ENCODE measurements at regions of chr9 and their contacts with region 1.

Region 1: GRCh38 chr9:37753489-37754190 is at the start of gene TRMT10B:
- DNase-seq: peak; percentile 10
- H3K4me3 ChIP-seq: peak within 1 kb of the TSS; percentile 78
- H3K27ac ChIP-seq: peak within 1 kb of the TSS; percentile 39
- H3K27me3 ChIP-seq: no peaks in the 10 kb centered on the region
- CTCF ChIP-seq: peak; percentile 24; the same call in 1 of the 2 replicates
- polyA plus RNA-seq, gene TRMT10B: 6.3 and 6.9 TPM in 2 replicates

Region 2: DNA sequence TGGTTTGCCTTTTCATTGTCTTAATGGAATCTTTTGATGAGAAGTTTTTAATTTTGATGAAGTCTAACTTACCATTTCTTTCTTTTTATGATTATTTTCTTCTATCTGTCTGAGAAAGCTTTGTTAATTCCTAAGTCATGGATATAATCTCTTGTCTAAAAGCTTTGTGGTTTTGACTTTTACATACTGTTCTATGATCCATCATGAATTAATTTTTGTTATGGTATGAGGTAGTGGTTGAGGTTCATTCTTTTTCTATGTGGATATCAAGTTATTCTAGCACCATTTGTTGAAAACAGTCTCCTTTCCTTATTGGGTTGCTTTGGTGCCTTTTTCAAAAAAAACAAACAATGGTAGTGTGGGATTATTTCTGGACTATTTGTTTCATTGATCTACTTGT is 197.9 kb before region 1 on chr9:
- CTCF ChIA-PET with region 1: no interaction called
- POLR2A ChIA-PET with region 1: no interaction called
- DNase-seq: no peak
- H3K4me3 ChIP-seq: no peak overlapping the region
- H3K27ac ChIP-seq: no peak overlapping the region
- H3K27me3 ChIP-seq: no peaks in the 10 kb centered on the region
- CTCF ChIP-seq: no peak

Region 3: GRCh38 chr9:38130724-38131123 is 377.1 kb after region 1 on chr9:
- CTCF ChIA-PET with region 1: no interaction called
- POLR2A ChIA-PET with region 1: no interaction called
- DNase-seq: no peak
- H3K4me3 ChIP-seq: no peak overlapping the region
- H3K27ac ChIP-seq: no peak overlapping the region
- H3K27me3 ChIP-seq: peaks cover 47% of the 10 kb centered on the region
- CTCF ChIP-seq: no peak

Region 4: DNA sequence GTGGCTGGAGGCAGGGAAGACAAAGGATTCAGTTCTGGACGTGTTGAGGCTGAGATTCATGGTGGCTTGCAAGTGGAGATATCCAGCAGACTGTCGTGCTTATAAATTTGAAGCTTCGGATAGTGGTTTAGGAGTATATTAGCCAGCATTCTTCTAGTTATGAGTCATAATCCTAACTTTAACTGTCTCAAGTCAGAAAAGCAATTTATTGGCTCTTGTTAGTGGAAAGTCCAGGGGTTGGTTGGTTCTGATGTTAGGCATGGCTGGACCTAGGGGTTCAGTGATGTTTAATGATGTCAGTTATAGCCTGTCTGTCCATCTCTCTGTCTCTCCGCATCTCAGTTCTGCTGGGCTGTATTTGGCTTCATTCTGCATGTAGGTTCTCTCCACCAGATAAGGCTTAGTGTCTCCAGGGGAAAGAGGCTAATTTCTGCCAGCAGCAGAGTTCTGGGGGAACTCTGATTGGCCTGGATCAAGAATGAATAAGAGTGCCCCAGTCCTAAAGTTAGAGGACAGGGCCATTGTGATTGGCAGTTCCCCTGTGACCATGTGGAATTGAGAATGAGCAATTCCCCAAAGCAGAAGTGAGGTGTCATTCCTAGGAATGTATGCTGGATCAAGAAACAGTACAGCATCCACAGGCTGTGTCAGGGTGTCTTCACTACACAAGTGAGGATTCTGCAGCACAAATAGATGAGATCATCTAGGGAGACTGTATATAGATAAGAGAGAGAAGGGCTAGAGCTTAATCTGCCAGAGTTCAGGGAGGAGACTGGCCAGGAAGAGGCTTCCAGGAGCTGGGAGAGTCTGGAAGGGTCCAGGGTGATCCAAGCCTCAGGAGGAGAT is 388.3 kb after region 1 on chr9:
- CTCF ChIA-PET with region 1: no interaction called
- POLR2A ChIA-PET with region 1: interaction called, 16 read pairs
- DNase-seq: peak; percentile 33
- H3K4me3 ChIP-seq: peak overlapping the region; percentile 38
- H3K27ac ChIP-seq: peak overlapping the region; percentile 83
- H3K27me3 ChIP-seq: peaks cover 10% of the 10 kb centered on the region
- CTCF ChIP-seq: no peak

Measured in AG04450 (cell line).